Activated CD4-positive, alpha-beta memory T cell treated with anti-CD3 and anti-CD28 coated beads for 36 hours (primary cell): ENCODE measurements at regions of chr1 and their contacts with region 1.

Region 1: GRCh38 chr1:32247983-32248889 is 1.2 kb downstream of the FAM167B start:
- DNase-seq: peak; percentile 89
- H3K4me3 Mint-ChIP-seq: peak overlapping the region; percentile 60
- H3K27ac Mint-ChIP-seq: peak overlapping the region; percentile 97
- H3K4me1 Mint-ChIP-seq: peaks cover 44% of the 10 kb centered on the region
- H3K27me3 Mint-ChIP-seq: no peaks in the 10 kb centered on the region

Region 2: DNA sequence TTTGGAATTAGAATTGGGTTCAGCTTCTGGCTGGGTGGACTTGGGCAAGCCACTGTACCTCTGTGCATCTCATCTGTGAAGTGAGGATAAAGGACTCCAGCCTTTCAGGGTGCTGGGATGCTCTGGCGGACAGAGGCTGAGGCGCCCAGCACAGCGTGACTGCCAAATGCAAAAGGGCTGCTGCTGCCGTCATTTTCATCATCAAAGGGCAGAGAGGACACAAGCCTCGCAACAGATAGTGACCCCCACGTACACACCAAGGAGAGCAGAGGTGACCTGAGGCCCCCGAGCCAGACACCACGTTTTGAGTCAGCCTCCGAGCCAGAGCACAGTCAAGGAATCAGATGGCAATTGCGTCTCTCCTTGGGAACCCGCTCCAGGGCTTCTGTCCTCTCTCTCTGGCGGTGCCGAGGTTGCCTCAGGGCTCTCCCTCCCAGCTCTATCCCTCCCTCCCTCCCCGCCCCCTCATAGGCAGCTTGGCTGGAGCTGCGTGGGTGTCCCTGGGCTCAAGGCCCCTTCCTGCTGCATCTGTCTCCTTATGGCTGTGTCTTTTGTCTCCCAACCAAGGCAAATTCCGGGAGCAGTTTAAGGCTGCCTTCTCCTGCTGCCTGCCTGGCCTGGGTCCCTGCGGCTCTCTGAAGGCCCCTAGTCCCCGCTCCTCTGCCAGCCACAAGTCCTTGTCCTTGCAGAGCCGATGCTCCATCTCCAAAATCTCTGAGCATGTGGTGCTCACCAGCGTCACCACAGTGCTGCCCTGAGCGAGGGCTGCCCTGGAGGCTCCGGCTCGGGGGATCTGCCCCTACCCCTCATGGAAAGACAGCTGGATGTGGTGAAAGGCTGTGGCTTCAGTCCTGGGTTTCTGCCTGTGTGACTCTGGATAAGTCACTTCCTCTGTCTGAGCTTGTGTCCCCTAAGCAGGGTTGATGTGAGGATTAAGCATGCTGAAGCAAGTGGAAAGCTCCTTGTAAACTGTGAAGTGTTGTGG is 621.7 kb before region 1 on chr1:
- CTCF ChIA-PET with region 1: no interaction called
- POLR2A ChIA-PET with region 1: no interaction called
- intact Hi-C with region 1: no loop called
- DNase-seq: peak; percentile 3
- H3K4me3 Mint-ChIP-seq: no peak overlapping the region
- H3K27ac Mint-ChIP-seq: no peak overlapping the region
- H3K4me1 Mint-ChIP-seq: no peaks in the 10 kb centered on the region
- H3K27me3 Mint-ChIP-seq: no peaks in the 10 kb centered on the region

Region 3: GRCh38 chr1:31938174-31938950 is 309.9 kb before region 1 on chr1 and contains the start of gene PTP4A2:
- CTCF ChIA-PET with region 1: no interaction called
- POLR2A ChIA-PET with region 1: no interaction called
- intact Hi-C with region 1: loop called (anchors 2 kb)
- DNase-seq: peak; percentile 94
- H3K4me3 Mint-ChIP-seq: peak within 1 kb of the TSS; percentile 98
- H3K27ac Mint-ChIP-seq: peak within 1 kb of the TSS; percentile 96
- H3K4me1 Mint-ChIP-seq: peaks cover 66% of the 10 kb centered on the region
- H3K27me3 Mint-ChIP-seq: no peaks in the 10 kb centered on the region
- total RNA-seq, gene PTP4A2: 275 to 285 TPM

Region 4: GRCh38 chr1:32179443-32180185 is 68.6 kb before region 1 on chr1 and contains the start of gene TXLNA:
- CTCF ChIA-PET with region 1: interaction called, 4 read pairs
- POLR2A ChIA-PET with region 1: interaction called, 3 read pairs
- intact Hi-C with region 1: loop called (anchors 2 kb)
- DNase-seq: peak; percentile 95
- H3K4me3 Mint-ChIP-seq: peak within 1 kb of the TSS; percentile 91
- H3K27ac Mint-ChIP-seq: peak within 1 kb of the TSS; percentile 96
- H3K4me1 Mint-ChIP-seq: peaks cover 38% of the 10 kb centered on the region
- H3K27me3 Mint-ChIP-seq: no peaks in the 10 kb centered on the region
- total RNA-seq, gene TXLNA: 77.4 to 78.2 TPM

Region 5: DNA sequence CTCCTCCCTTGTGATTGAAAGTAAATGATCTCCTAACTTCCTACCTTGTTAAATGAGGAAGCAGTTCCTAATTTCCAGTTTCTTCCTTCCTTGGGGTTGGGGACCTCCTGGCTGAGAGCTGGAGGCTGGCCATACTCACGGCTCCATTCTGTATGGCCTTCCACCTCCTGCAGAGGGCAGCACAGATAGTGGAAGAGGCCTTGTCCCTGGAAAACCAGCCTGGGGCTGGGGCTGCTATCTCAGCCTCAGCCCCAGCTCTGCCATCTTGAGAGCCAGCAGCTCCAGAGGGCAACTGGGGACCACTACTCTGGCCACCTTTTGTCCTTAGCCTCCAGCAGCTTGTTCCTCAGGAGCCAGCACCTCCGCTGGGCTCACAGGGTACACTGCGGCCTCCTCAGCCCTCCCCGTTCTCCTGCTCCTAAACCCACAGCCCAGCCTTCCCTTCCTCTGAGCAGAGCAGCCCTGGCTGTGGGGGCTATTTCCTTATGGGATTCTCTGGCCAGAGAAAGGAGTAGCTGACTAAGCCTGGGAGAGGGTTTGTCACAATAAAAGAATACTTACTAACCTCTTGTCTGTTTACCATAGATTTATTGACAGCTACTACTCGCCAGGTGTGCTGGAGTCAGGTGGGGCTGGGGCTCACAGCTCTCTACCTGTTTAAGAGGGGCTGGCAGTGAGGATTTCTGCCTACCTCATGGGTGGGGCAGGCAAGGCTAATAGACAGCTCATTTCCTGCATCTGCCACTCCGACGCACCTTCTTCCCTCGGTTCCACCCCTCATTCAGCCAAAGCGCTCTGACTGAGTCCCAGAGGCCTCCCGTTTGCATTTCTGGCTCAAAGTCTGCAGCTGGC is 32.4 kb before region 1 on chr1:
- CTCF ChIA-PET with region 1: interaction called, 65 read pairs
- POLR2A ChIA-PET with region 1: interaction called, 3 read pairs
- intact Hi-C with region 1: no loop called
- DNase-seq: peak; percentile 74
- H3K4me3 Mint-ChIP-seq: no peak overlapping the region
- H3K27ac Mint-ChIP-seq: peak overlapping the region; percentile 8
- H3K4me1 Mint-ChIP-seq: peaks cover 14% of the 10 kb centered on the region
- H3K27me3 Mint-ChIP-seq: no peaks in the 10 kb centered on the region

Region 6: DNA sequence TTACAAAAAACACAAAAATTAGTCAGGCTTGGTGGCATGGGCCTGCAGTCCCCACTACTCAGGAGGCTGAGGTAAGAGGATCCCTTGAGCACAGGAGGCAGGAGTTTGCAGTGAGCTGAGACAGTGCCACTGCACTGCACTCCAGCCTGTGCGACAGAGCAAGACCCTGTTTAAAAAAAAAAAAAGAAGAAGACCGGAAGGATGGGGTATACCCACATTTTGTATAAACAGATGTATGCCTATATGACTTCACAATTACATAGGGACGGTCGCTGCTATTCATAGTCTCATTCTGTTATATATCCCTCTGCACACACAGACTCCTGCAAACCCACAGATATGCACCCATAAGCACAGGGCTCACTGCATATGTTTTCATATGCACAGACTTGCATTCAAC is 15.5 kb after region 1 on chr1:
- CTCF ChIA-PET with region 1: interaction called, 18 read pairs
- POLR2A ChIA-PET with region 1: interaction called, 18 read pairs
- intact Hi-C with region 1: no loop called
- DNase-seq: peak; percentile 50
- H3K4me3 Mint-ChIP-seq: no peak overlapping the region
- H3K27ac Mint-ChIP-seq: peak overlapping the region; percentile 85
- H3K4me1 Mint-ChIP-seq: peaks cover 52% of the 10 kb centered on the region
- H3K27me3 Mint-ChIP-seq: no peaks in the 10 kb centered on the region

Region 7: GRCh38 chr1:32286763-32287162 is 38.5 kb after region 1 on chr1:
- CTCF ChIA-PET with region 1: interaction called, 29 read pairs
- POLR2A ChIA-PET with region 1: interaction called, 16 read pairs
- intact Hi-C with region 1: no loop called
- DNase-seq: no peak
- H3K4me3 Mint-ChIP-seq: no peak overlapping the region
- H3K27ac Mint-ChIP-seq: no peak overlapping the region
- H3K4me1 Mint-ChIP-seq: peaks cover 15% of the 10 kb centered on the region
- H3K27me3 Mint-ChIP-seq: no peaks in the 10 kb centered on the region

Region 8: GRCh38 chr1:32335790-32336590 is 87.8 kb after region 1 on chr1 and contains the start of gene MARCKSL1:
- CTCF ChIA-PET with region 1: interaction called, 3 read pairs
- POLR2A ChIA-PET with region 1: interaction called, 5 read pairs
- intact Hi-C with region 1: loop called (anchors 2 kb)
- DNase-seq: peak; percentile 81
- H3K4me3 Mint-ChIP-seq: peak within 1 kb of the TSS; percentile 77
- H3K27ac Mint-ChIP-seq: peak within 1 kb of the TSS; percentile 43
- H3K4me1 Mint-ChIP-seq: peaks cover 48% of the 10 kb centered on the region
- H3K27me3 Mint-ChIP-seq: no peaks in the 10 kb centered on the region
- total RNA-seq, gene MARCKSL1: 13.1 to 14.6 TPM